ENCODE measurements at regions of chr6 and their contacts with region 1.

Region 1: GRCh38 chr6:138588805-138589434 is 89.6 kb upstream of the NHSL1 start:
- DNase-seq: peak; percentile 70
- CTCF ChIP-seq: peak; percentile 91

Region 2: DNA sequence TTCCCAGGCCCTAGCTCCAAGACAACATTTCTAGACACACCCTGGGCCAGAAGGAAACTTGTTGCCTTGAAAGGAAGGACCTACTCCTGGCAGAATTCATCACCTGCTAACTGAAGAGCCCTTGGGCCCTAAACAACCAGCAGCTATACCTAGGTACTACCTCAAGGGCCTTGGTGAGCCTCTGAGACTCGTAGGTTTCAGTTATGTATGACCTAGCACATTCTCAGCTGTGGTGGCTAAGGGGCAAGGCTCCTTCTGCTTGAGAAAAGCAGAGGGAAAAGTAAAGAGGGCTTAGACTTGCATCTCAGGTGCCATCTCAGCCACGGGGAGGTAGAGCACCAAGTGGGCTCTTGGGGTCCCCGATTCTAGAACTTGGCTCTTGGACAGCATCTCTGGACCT is 42.6 kb after region 1 on chr6:
- in situ Hi-C with region 1: no loop called
- DNase-seq: no peak
- CTCF ChIP-seq: no peak

Region 3: DNA sequence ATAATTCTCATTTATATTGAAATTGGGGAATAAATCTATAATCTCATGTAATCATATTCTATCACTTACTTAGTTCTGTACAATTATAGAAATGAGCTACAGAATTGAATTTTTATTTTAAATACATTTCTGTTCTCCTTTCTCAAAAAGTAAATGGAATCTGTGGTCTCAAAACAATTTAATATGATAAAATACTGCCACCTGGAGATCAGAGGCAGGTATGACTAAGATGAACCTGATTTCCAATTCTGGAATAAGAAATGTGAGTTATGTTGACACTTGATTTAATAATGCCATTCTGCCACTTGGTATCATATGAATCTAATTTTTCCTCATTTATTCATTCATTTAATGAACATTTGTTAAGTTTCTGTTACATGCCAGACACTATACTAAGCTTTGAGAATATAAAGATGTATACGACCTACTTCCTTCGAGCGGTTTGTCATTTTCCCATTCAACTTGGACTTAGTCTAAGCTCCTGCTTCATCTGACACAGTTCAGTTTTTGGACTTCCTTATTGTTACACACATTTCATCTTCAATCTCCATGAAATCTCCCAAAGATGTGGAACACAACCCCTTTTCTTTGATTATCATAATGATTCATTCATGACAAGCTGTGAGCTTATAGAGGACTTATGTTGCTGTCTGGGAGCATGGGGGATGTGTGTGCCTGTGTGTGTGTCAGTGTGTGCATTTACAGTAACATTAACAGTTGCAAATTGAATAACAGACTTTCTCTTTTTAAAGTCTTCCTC is 177.2 kb after region 1 on chr6:
- in situ Hi-C with region 1: loop called (anchors 5 kb)
- DNase-seq: peak; percentile 39
- CTCF ChIP-seq: peak; percentile 45